Activated B cell treated with CpG ODN at 0.5 μM for 24 hours (primary cell): ENCODE measurements at regions of chr3 and their contacts with region 1.

Region 1: GRCh38 chr3:112464264-112464663 is 35.0 kb downstream of the BTLA start:
- DNase-seq: no peak
- ATAC-seq: peak; percentile 50
- H3K4me3 Mint-ChIP-seq: peak overlapping the region; percentile 68
- H3K27ac Mint-ChIP-seq: peak overlapping the region; percentile 65
- H3K4me1 Mint-ChIP-seq: peaks cover 91% of the 10 kb centered on the region
- H3K27me3 Mint-ChIP-seq: no peaks in the 10 kb centered on the region
- CTCF ChIP-seq: no peak

Region 2: DNA sequence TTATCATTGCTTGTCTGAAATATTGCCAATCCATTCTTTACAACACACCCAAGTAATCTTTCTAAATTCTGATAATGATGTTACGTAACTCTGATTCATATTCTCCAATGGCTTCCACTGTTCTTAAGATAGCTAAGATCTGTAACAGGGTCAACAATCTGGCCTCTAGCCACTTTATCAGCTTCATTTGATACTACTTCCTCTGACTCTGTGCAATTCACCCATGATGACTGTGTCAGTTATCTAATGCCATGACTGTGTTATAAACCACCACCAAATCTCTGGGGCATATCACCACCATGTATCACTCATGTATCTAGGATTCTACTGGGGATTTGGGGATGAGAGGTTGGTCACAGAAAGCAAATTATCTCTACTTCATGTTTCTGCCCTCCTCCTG is 87.3 kb before region 1 on chr3:
- CTCF ChIA-PET with region 1: no interaction called
- POLR2A ChIA-PET with region 1: no interaction called
- intact Hi-C with region 1: loop called (anchors 2 kb)
- DNase-seq: no peak
- ATAC-seq: peak; percentile 71
- H3K4me3 Mint-ChIP-seq: no peak overlapping the region
- H3K27ac Mint-ChIP-seq: no peak overlapping the region
- H3K4me1 Mint-ChIP-seq: peaks cover 56% of the 10 kb centered on the region
- H3K27me3 Mint-ChIP-seq: no peaks in the 10 kb centered on the region
- CTCF ChIP-seq: no peak

Region 3: DNA sequence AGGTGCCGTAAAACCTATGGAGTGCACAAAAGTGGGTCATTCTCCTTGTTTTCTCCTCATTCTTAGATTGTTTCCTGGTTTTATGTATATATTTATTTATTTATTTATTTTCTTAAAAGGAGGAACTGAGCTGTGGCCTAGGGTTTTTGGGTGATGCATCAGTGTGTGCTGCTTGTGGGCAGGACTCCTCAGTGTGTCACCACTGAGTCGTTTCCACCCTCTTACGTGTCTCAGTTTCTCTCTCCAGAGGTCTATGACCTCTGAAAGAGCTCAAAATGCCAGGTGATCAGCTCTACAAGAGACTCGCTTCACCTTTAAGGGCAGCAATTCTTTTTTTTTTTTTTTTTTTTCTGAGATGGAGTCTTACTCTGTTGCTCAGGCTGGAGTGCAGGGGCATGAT is 58.4 kb before region 1 on chr3:
- CTCF ChIA-PET with region 1: interaction called, 3 read pairs
- POLR2A ChIA-PET with region 1: interaction called, 3 read pairs
- intact Hi-C with region 1: loop called (anchors 10 kb)
- DNase-seq: no peak
- ATAC-seq: no peak
- H3K4me3 Mint-ChIP-seq: no peak overlapping the region
- H3K27ac Mint-ChIP-seq: peak overlapping the region; percentile 68
- H3K4me1 Mint-ChIP-seq: peaks cover 31% of the 10 kb centered on the region
- H3K27me3 Mint-ChIP-seq: no peaks in the 10 kb centered on the region
- CTCF ChIP-seq: no peak

Region 4: DNA sequence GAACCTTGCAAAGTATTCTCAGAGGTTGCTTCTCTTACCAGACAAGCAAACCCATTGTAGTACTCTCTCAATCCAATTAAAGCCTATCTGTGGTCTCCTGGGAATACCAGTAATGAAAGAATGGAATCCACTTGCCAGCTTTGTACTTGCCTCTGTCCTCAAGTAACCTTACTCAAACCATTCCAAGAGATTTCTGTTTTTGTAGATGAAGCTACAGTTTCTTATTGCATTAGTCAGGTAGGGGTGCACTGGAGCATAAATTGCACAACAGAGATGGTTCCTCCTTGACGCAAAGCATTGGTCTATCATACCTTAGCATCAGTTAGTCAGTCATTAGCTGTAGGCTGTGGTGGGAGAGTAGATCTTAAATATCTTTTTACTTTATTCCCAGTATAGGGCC is 17.9 kb before region 1 on chr3:
- CTCF ChIA-PET with region 1: no interaction called
- POLR2A ChIA-PET with region 1: interaction called, 3 read pairs
- intact Hi-C with region 1: loop called (anchors 1 kb)
- DNase-seq: no peak
- ATAC-seq: peak; percentile 71
- H3K4me3 Mint-ChIP-seq: no peak overlapping the region
- H3K27ac Mint-ChIP-seq: peak overlapping the region; percentile 4
- H3K4me1 Mint-ChIP-seq: peaks cover 39% of the 10 kb centered on the region
- H3K27me3 Mint-ChIP-seq: no peaks in the 10 kb centered on the region
- CTCF ChIP-seq: no peak

Region 5: DNA sequence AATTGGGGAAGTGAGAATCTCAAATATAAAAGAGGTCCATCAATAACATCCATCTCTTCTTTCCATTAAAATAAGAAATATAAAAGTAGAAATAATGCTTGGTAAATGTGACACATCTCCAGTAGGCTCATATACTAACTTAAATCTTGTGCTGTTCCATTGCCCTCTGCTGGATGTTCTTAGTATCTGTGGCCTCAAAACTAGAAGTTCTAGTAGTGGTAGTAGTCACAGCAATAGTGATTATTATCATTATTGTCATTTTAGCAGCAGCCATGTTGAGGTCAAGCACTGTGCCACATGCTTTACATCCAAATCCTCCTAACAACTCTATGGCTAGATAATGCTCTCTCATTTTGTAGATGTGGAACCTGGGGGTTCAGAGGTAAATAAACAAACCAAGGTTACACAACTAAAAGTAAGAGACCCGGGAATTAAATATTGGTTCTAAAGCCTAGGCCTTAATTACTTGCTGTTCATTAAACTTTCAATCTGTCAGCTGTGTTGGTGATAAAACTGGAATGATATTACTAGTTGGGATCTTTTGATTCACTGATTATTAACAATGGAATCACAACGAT is 55.2 kb after region 1 on chr3:
- CTCF ChIA-PET with region 1: no interaction called
- POLR2A ChIA-PET with region 1: no interaction called
- intact Hi-C with region 1: loop called (anchors 2 kb)
- DNase-seq: no peak
- ATAC-seq: peak; percentile 75
- H3K4me3 Mint-ChIP-seq: peak overlapping the region; percentile 58
- H3K27ac Mint-ChIP-seq: peak overlapping the region; percentile 89
- H3K4me1 Mint-ChIP-seq: peaks cover 41% of the 10 kb centered on the region
- H3K27me3 Mint-ChIP-seq: no peaks in the 10 kb centered on the region
- CTCF ChIP-seq: no peak

Region 6: DNA sequence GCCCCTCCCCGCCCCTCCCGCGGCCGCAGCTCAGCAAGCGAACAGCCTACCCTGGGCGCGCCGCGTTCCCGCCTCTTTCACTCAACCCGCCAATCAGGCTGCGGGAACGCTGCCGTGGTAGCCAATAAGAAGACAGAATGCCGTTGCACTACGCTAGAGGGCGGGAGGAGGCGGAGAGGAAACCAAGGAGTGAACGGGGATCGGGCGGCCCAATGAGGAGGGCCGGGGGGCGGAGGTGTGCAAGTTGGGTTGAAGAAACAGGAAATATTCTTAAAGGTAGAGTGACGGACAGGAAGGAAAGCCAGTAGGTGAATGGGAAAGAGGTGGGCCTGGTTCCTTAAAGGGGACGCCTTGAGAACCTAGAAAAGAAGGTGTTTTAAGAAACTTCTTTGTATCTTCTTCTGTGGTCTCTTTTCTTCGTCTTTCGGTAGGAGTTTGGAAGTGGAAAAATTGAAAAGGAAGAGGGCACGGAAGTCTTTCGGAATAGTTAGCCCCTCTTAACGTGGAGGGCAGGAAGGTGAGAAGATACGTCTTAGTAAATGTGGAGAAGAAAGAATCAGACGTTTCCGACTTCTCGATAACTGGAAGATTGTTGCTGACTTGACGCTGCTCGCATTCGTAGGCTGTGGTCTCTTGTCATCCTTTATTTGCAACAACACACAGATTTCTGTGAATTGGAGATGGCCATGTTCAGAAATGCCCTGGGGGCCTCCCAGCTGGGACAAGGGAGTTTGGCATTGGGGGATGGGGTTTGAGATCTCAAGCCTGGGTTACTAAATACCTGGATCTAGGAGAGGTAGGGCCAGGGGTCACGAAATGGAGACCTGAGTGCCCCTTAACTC is 1232.6 kb after region 1 on chr3:
- CTCF ChIA-PET with region 1: no interaction called
- POLR2A ChIA-PET with region 1: no interaction called
- intact Hi-C with region 1: loop called (anchors 10 kb)
- DNase-seq: peak; percentile 95
- ATAC-seq: peak; percentile 89
- H3K4me3 Mint-ChIP-seq: no peak overlapping the region
- H3K27ac Mint-ChIP-seq: no peak overlapping the region
- H3K4me1 Mint-ChIP-seq: peaks cover 29% of the 10 kb centered on the region
- H3K27me3 Mint-ChIP-seq: no peaks in the 10 kb centered on the region
- CTCF ChIP-seq: no peak